SK-N-SH (cell line): ENCODE measurements at regions of chr6 and their contacts with region 1.

Region 1: DNA sequence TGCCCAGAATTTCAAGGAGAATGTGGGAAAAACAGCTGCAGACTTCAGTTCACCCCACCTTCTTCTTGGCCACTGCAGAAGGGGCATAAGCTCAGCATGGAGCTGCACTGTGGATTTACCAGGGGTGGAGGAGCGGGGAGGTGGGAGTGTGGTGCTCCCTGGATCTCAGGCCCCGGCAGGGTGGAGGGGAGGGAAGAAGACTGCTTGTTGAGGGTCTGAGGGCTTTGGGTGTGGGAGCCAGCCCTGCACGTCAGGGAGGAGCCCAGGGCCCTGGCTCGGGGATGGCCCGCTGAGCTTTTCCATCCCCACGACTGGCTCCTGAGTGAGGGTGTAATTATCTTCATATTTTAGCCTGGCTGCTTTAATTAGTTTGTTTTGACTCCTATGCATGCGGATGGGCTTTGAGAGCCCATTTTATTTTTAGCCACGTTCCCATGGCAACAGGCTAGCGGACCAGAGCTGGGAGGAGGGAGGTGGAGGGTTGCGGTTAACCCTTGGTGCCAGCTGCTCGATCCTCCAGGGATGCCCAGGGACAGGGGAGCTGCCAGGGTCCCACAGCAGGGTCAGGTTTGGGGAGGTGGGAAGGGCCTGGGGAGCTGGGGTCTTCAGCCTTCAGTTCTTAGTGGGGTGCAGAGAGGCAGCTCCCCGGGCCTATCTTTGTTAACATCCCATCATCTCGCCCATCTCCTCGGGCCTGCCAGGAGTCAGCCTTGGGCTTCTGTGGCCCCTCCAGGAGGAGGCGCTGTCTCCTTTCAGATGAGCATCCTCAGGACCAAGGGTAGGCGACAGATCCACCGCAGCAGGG is 68.2 kb downstream of the RAB44 start:
- DNase-seq: peak; percentile 90
- H3K4me3 ChIP-seq: peak overlapping the region in 1 of 2 experiments; percentile 46; a peak in 1 of 4 replicates
- H3K27ac ChIP-seq: no peak overlapping the region
- H3K4me1 ChIP-seq: peaks cover 13 to 14% of the 10 kb centered on the region in 2 experiments; a peak in 3 of 4 replicates
- H3K27me3 ChIP-seq: no peaks in the 10 kb centered on the region
- CTCF ChIP-seq: peak; percentile 87
- EP300 ChIP-seq: no peak
- RAD21 ChIP-seq: peak; percentile 98

Region 2: DNA sequence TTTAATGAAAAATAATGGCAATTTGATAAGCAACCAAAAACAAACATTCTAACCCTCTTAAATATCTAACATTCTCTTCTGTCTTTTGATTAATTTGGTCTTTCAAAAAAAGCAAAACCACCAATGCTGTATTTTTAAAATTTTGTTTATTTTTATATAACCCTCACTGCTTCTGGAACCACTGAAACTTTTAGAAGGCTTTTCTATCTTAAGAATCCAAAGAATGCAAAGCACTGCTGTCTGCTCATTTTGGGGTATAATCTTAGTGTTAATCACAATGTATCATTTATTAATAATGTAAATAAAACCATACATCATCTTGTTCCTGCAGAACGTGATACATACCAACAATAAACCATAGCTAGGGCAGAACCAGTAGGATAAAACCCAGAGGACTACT is 232.5 kb before region 1 on chr6:
- CTCF ChIA-PET with region 1: no interaction called
- POLR2A ChIA-PET with region 1: no interaction called
- DNase-seq: no peak
- H3K4me3 ChIP-seq: no peak overlapping the region
- H3K27ac ChIP-seq: no peak overlapping the region
- H3K4me1 ChIP-seq: no peaks in the 10 kb centered on the region
- H3K27me3 ChIP-seq: no peaks in the 10 kb centered on the region
- CTCF ChIP-seq: no peak
- EP300 ChIP-seq: no peak
- RAD21 ChIP-seq: no peak

Region 3: DNA sequence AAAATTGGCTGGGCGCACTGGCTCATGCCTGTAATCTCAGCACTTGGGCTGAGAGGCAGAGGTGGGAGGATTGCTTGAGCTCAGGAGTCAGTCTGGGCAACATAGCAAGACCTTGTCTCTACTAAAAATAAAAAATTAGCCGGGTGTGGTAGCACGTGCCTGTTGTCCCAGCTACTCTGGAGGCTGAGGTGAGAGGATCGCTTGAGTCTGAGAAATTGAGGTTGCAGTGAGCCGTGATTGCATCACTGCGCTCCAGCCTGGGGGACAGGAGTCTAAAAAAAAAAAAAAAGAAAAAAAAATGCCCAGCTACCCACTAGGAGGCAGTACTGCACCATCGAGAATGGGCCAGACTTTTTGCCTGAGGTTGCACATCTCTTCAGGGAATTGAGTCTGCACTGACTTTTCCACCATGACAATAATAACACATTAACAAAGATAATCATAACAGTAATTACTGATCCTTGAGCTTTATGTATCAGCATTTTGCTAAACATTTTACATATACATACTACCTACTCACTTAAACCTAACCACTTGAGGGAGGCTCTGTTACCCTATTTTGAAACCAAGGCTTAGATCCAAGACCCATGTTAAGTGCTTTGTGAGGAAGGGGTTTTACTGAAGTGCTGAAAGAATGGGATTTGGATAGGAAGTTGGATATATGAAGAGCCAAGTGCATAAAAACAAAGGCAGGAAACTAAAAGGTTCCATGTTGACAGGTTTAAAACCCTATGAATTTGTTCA is 150.6 kb before region 1 on chr6:
- CTCF ChIA-PET with region 1: interaction called, 111 read pairs
- POLR2A ChIA-PET with region 1: no interaction called
- DNase-seq: peak; percentile 49
- H3K4me3 ChIP-seq: no peak overlapping the region; a peak in 1 of 4 replicates
- H3K27ac ChIP-seq: peak overlapping the region; percentile 28 to 36; a peak in 2 of 4 replicates
- H3K4me1 ChIP-seq: peaks cover 15 to 23% of the 10 kb centered on the region in 2 experiments; a peak in 3 of 4 replicates
- H3K27me3 ChIP-seq: no peaks in the 10 kb centered on the region
- CTCF ChIP-seq: peak; percentile 86
- EP300 ChIP-seq: 0 out of 4 replicates have a peak, but pooled peaks of 1 of the 2 experiments have one; percentile 4
- RAD21 ChIP-seq: peak; percentile 85

Region 4: DNA sequence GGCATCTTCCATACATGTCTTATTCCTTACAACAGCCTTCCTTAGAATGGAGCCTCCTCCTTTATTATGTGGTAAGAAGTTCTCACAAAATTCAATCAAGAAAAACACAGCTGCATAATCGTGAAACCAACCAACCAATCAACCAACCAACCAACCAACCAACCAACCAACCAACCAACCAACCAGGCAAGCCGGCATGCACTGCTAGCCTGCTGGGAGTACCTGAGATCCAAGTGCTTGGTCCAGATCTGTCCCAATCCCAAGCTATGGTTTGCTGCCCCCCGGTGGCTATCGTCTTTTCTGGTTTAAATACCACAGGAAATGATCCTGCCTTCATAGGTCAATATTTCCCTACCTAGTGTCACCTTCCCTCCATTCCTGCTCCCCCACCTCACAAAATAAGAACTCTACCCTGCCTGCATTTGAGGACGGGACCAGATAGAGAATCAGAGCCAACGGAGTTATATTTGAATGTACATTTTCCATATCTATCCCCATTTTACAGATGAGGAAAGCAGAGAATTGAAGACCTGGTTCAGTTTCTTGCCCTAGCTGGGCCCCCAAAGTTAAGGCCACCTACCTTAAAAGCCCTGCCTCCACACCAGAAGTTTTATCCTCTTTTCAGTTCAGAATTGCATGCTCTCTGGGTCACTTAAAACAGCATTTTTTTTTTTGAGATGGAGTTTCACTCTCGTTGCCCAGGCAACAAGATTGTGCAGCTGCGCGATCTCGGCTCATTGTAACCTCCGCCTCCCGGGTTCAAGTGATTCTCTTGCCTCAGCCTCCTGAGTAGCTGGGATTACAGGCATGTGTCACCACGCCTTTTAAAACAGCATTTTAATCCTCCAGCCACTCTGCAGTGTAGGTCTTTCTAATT is 41.0 kb before region 1 on chr6:
- CTCF ChIA-PET with region 1: no interaction called
- POLR2A ChIA-PET with region 1: no interaction called
- DNase-seq: peak; percentile 85
- H3K4me3 ChIP-seq: no peak overlapping the region
- H3K27ac ChIP-seq: no peak overlapping the region
- H3K4me1 ChIP-seq: no peaks in the 10 kb centered on the region; a peak in 1 of 4 replicates
- H3K27me3 ChIP-seq: no peaks in the 10 kb centered on the region
- CTCF ChIP-seq: peak; percentile 71
- EP300 ChIP-seq: no peak
- RAD21 ChIP-seq: peak; percentile 85

Region 5: DNA sequence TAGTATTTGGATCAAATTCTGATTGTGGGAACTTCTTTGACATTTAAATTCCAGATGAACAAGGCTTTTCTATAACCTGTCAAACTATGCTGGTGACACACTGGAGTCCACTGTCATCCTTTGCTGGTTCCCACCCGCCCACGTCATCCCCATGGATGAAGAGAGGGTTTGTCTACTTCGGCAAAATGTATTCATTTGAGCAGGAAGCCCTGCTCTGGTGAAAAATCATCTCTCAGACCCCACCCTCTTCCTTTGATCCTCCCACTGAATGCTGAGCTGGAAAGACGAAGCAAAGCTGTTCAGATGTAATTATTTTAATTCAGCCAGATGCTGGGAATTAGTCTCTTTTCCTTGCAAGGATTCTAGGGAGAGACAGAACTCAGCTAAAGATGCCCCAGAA is 23.0 kb after region 1 on chr6:
- CTCF ChIA-PET with region 1: interaction called, 71 read pairs
- POLR2A ChIA-PET with region 1: no interaction called
- DNase-seq: no peak
- H3K4me3 ChIP-seq: no peak overlapping the region
- H3K27ac ChIP-seq: no peak overlapping the region
- H3K4me1 ChIP-seq: peaks cover 0 to 14% of the 10 kb centered on the region in 2 experiments; a peak in 2 of 4 replicates
- H3K27me3 ChIP-seq: no peaks in the 10 kb centered on the region
- CTCF ChIP-seq: no peak
- EP300 ChIP-seq: no peak
- RAD21 ChIP-seq: no peak

Region 6: DNA sequence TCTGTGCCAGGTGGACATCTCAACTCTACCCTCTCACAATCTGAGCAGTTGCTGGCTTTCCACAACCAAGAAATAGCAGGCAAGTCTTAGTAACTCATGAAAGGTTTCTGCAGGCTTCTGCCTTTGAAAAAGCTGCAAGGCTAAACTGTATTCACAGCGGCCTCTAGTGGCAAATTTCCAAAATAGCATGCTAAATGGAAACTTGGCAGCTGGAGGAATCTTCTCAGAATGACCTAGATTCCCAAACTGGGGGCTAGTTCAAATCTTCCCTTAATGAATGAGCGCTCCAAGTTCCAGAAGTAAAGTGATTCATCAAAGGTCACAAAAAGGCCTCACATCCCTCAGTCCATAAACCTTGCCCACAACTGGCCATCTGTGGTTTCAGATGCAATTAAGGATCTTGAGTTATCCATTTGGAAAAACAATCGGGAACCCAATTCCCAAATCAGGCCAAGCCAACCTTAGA is 85.4 kb after region 1 on chr6:
- CTCF ChIA-PET with region 1: interaction called, 200 read pairs
- POLR2A ChIA-PET with region 1: no interaction called
- DNase-seq: peak; percentile 61
- H3K4me3 ChIP-seq: no peak overlapping the region; a peak in 1 of 4 replicates
- H3K27ac ChIP-seq: no peak overlapping the region
- H3K4me1 ChIP-seq: peaks cover 10 to 13% of the 10 kb centered on the region in 2 experiments; a peak in 2 of 4 replicates
- H3K27me3 ChIP-seq: no peaks in the 10 kb centered on the region
- CTCF ChIP-seq: peak; percentile 75
- EP300 ChIP-seq: no peak
- RAD21 ChIP-seq: peak; percentile 83

Region 7: GRCh38 chr6:36874443-36875249 is 108.8 kb after region 1 on chr6 and contains the start of gene PPIL1:
- CTCF ChIA-PET with region 1: interaction called, 72 read pairs
- POLR2A ChIA-PET with region 1: interaction called, 4 read pairs
- DNase-seq: peak; percentile 94
- H3K4me3 ChIP-seq: peak within 1 kb of the TSS; percentile 76 to 87
- H3K27ac ChIP-seq: peak within 1 kb of the TSS; percentile 95 to 100
- H3K4me1 ChIP-seq: peaks cover 0 to 10% of the 10 kb centered on the region in 2 experiments; a peak in 2 of 4 replicates
- H3K27me3 ChIP-seq: no peaks in the 10 kb centered on the region
- CTCF ChIP-seq: no peak
- EP300 ChIP-seq: peak in 1 of 2 experiments; percentile 6; a peak in 2 of 4 replicates
- RAD21 ChIP-seq: no peak
- polyA plus RNA-seq, gene PPIL1: 36.6 and 48.4 TPM in 2 replicates